Endothelial cell of umbilical vein (primary cell): ENCODE measurements at regions of chr9 and their contacts with region 1.

Region 1: DNA sequence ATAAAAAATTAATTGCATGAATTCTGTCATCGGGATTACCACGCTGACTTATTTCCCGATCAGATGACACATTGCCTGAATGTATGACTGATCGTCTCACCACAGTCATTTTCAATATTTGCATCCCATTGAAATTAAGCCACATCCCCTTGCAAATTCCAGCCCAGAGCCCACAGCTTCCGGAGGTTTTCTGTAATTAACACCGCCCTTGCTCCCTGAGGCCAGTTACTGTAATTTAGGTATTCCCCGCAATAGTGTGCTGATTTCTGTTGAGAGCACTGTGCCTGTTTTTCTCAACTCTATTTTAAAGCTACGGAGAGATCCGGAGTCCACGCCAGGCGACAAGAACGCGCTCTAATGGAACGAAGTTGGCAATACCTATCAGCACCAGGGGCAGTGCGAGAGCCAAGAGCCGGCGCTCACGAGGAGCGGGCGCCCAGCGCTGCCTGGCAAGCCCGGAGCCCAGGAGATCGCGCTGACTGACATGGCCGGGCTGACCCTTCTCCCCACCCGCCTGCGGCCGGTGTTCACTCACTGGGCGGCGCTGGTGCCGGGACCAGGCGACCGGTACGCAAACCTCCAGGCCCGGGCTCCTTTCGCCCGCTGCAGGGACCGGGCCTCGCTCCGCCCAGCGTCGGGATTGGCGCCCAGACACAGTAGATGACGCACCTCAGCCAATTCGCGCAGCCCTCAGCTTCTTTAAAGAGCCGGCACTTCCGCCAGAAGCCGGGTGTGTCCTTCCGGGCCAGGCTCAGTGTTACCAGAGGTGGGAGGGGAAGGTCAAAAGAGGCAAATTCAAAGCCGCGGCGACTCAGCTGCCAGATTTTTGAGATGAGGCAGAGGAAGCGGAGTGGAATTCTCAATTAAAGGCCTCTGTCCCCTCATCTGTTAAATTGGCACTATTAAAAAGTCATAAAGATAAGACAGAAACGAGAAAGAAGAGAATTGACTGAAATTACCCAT is at the start of gene PLGRKT:
- DNase-seq: peak; percentile 88
- H3K4me3 ChIP-seq: peak within 1 kb of the TSS; percentile 53 to 76 (median 69)
- H3K27ac ChIP-seq: peak within 1 kb of the TSS; percentile 93
- H3K4me1 ChIP-seq: peaks cover 30% of the 10 kb centered on the region
- H3K27me3 ChIP-seq: no peaks in the 10 kb centered on the region
- CTCF ChIP-seq: peak; percentile 7 to 25
- POLR2A ChIP-seq: peak; percentile 81
- total RNA-seq, gene PLGRKT: 20.3 and 21.2 TPM in 2 replicates

Region 2: DNA sequence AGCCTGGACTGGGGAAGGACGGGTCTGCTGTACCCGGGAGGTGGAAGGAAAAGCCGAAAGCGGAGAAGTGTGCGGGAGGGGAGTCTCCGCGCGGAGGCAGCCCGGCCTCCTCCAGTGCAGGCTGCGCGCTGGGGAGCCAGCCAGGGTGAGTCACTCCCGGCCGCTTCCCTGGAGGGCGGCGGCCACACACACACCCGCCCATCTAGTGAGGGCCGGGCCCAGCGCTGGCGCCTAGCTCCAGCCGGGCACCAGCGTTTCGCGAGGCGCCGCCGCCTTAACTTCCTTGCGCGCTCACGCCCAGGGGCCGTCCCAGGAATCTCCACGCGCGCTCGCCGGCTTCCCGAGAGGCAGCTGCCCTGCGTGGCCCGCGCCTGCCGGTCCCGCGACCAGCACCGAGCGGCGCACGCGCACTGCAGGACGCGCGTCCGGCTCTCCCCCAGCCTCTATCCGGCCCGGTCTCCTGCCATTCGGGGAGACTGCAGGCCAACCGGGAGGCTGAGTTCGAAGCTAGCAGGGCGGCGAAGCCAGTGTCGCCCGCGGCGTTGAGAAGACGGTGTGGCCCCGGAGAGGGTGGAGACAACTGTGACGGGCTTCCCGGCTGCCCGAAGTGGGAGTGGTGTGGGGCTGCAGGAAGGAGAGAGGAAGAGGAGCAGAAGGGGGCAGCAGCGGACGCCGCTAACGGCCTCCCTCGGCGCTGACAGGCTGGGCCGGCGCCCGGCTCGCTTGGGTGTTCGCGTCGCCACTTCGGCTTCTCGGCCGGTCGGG is 452.7 kb before region 1 on chr9 and contains the start of gene JAK2:
- CTCF ChIA-PET with region 1: interaction called, 13 read pairs
- POLR2A ChIA-PET with region 1: no interaction called
- dilution Hi-C with region 1: no loop called
- intact Hi-C with region 1: loop called (anchors 2 kb)
- DNase-seq: peak; percentile 96
- H3K4me3 ChIP-seq: peak within 1 kb of the TSS; percentile 63 to 86 (median 79)
- H3K27ac ChIP-seq: peak within 1 kb of the TSS; percentile 90
- H3K4me1 ChIP-seq: peaks cover 36% of the 10 kb centered on the region
- H3K27me3 ChIP-seq: no peaks in the 10 kb centered on the region
- CTCF ChIP-seq: peak; percentile 23 to 61
- POLR2A ChIP-seq: peak; percentile 76
- total RNA-seq, gene JAK2: 9.7 and 10.3 TPM in 2 replicates

Region 3: DNA sequence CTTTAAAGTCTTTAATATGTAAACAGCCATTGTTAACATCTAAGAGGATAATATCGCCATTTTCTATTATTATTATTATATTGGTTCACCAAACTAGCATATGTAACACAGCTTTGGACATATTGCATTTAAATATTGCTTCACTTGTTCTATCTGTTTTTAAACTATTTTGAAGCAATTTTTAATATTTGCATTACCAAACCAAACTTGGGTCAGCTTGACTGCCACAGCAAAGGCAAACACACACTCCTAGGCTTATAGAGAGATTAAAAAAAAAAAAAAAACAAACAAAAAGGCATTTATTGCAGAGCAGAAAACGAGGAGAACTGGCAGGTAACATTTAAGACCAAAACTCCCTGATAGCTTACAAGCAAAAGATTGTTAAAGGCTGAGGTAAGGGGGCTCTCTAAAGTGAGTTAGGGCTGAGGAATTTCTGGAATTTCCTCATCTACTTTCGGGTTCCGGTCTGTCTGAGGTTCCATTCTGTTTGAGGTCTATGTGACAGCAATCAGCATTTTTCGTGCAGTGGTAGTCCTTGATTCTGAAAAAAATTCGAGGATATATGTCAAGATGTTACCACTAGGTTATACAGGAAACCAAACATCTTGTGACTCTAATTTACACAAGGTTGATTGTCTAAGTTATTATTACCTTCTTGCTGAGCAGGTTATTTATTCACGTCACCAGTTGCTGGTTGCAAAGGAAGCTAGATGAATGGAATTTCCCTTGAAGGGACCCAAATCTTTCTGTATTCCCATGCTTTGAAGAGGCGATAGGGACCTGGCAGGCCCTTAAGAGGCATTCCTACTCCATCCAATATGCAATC is 168.4 kb before region 1 on chr9:
- CTCF ChIA-PET with region 1: interaction called, 7 read pairs
- POLR2A ChIA-PET with region 1: no interaction called
- dilution Hi-C with region 1: no loop called
- intact Hi-C with region 1: loop called (anchors 1 kb)
- DNase-seq: peak; percentile 90
- H3K4me3 ChIP-seq: no peak overlapping the region
- H3K27ac ChIP-seq: peak overlapping the region; percentile 99
- H3K4me1 ChIP-seq: peaks cover 24% of the 10 kb centered on the region
- H3K27me3 ChIP-seq: no peaks in the 10 kb centered on the region
- CTCF ChIP-seq: no peak
- POLR2A ChIP-seq: no peak

Region 4: DNA sequence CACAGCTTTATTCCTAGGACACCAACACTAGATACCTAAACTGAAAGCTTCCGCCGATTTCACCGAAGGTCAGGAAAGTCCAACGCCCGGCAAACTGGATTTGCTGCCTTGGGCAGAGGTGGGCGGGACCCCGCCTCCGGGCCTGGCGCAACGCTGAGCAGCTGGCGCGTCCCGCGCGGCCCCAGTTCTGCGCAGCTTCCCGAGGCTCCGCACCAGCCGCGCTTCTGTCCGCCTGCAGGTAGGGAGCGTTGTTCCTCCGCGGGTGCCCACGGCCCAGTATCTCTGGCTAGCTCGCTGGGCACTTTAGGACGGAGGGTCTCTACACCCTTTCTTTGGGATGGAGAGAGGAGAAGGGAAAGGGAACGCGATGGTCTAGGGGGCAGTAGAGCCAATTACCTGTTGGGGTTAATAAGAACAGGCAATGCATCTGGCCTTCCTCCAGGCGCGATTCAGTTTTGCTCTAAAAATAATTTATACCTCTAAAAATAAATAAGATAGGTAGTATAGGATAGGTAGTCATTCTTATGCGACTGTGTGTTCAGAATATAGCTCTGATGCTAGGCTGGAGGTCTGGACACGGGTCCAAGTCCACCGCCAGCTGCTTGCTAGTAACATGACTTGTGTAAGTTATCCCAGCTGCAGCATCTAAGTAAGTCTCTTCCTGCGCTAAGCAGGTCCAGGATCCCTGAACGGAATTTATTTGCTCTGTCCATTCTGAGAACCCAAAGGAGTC is 13.0 kb after region 1 on chr9 and contains the start of gene CD274:
- CTCF ChIA-PET with region 1: interaction called, 10 read pairs
- POLR2A ChIA-PET with region 1: interaction called, 4 read pairs
- dilution Hi-C with region 1: no loop called
- intact Hi-C with region 1: no loop called
- DNase-seq: peak; percentile 92
- H3K4me3 ChIP-seq: peak within 1 kb of the TSS; percentile 38 to 98 (median 72)
- H3K27ac ChIP-seq: peak within 1 kb of the TSS; percentile 79
- H3K4me1 ChIP-seq: peaks cover 68% of the 10 kb centered on the region
- H3K27me3 ChIP-seq: no peaks in the 10 kb centered on the region
- CTCF ChIP-seq: peak; percentile 71 to 79
- POLR2A ChIP-seq: peak; percentile 82
- total RNA-seq, gene CD274: 26.8 and 29.7 TPM in 2 replicates

Region 5: GRCh38 chr9:5582835-5583195 is 145.3 kb after region 1 on chr9:
- CTCF ChIA-PET with region 1: interaction called, 22 read pairs
- POLR2A ChIA-PET with region 1: no interaction called
- dilution Hi-C with region 1: no loop called
- intact Hi-C with region 1: no loop called
- DNase-seq: no peak
- H3K4me3 ChIP-seq: no peak overlapping the region
- H3K27ac ChIP-seq: peak overlapping the region; percentile 10
- H3K4me1 ChIP-seq: peaks cover 36% of the 10 kb centered on the region
- H3K27me3 ChIP-seq: no peaks in the 10 kb centered on the region
- CTCF ChIP-seq: no peak
- POLR2A ChIP-seq: no peak